CD4-positive, alpha-beta T cell (primary cell): ENCODE measurements at regions of chr3 and their contacts with region 1.

Region 1: DNA sequence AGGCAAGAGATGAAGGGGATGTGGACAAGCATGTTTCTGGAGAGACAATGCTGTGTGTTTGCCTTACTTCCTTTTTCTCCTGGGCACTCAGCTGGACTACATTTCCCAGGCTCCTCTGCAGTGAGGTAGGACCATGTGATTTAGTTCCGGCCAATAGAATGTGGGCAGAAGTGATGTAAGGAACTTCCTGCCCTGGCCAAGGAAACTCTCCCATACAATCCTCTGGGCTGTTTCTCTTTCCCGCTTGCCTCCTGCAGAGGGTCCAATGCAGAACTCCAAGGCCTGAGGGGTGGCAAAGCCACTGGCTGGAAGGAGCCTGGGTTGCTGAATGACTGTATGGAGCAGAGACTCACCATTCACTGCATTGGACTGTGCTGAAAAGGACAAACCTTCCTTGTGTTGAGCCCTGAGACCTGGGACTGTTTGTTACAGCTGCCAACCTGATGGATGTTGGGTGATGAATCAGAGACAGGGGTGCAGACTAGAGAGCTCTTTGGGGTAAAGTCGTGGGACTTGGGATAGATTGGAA is 82.7 kb upstream of the SLC6A6 start:
- DNase-seq: peak in 3 of 14 experiments; percentile 29 to 61 (median 53)
- ATAC-seq: no peak
- H3K4me3 ChIP-seq: no peak overlapping the region
- H3K4me3 Mint-ChIP-seq: no peak overlapping the region
- H3K27ac ChIP-seq: no peak overlapping the region
- H3K27ac Mint-ChIP-seq: no peak overlapping the region
- H3K4me1 ChIP-seq: no peaks in the 10 kb centered on the region
- H3K4me1 Mint-ChIP-seq: no peaks in the 10 kb centered on the region
- H3K27me3 ChIP-seq: no peaks in the 10 kb centered on the region
- H3K27me3 Mint-ChIP-seq: no peaks in the 10 kb centered on the region
- CTCF ChIP-seq: no peak

Region 2: DNA sequence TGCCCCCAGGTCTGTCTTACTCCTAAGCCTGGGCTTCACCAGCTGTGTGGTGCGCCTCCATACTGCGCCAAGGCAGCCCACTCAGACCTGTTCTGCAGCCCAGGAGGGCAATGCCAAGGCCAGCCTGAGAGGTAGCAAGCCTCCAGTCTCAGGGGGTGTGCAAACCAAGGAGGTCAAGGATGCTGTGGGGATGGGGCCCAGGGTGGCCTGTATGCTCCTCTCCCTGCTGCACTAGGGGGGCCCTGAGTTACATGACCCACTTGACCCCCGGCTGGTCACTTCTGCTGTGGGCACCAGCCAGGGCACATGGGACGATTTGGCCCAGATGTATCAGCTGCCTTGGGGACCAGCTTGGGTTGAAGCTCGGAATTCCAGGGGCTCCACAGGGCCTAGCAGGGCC is 12.7 kb after region 1 on chr3:
- CTCF ChIA-PET with region 1: no interaction called
- POLR2A ChIA-PET with region 1: no interaction called
- intact Hi-C with region 1: loop called in 1 of 2 experiments (anchors 1 kb)
- DNase-seq: no peak
- ATAC-seq: no peak
- H3K4me3 ChIP-seq: no peak overlapping the region
- H3K4me3 Mint-ChIP-seq: no peak overlapping the region
- H3K27ac ChIP-seq: no peak overlapping the region
- H3K27ac Mint-ChIP-seq: no peak overlapping the region
- H3K4me1 ChIP-seq: no peaks in the 10 kb centered on the region
- H3K4me1 Mint-ChIP-seq: no peaks in the 10 kb centered on the region
- H3K27me3 ChIP-seq: no peaks in the 10 kb centered on the region
- H3K27me3 Mint-ChIP-seq: peaks cover 4% of the 10 kb centered on the region
- CTCF ChIP-seq: no peak